ENCODE measurements at regions of chr1 and their contacts with region 1.

Region 1: DNA sequence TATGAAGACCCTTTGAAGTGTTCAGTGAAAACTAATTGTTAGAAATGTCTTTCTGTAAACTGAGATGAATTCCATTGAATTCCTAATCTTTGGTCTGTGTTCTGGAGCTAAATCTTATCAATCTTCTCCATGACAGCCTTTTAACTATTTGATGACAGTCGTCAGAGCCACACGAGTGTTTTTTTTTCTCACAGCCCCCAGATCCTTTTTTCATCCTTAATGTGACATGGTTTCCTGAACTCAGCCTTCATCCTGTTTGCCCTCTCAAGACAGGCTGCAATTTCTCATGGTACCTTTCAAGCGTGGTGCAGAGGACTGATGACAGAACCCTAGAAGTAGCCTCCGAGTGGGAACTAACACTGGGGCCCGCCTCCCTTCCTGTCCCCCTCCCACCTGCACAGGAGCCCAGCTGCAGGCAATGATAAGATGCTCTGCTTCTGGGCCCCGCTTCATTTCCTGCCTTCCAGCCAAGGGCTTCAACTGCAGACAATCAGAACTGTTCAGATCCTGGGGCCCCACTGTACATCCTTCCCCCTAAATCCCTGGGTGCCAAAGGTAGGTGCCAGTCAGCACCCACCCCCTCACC is 114.6 kb upstream of the VAV3 start:
- DNase-seq: peak; percentile 71
- ATAC-seq: peak; percentile 74
- H3K4me3 Mint-ChIP-seq: no peak overlapping the region
- H3K27ac Mint-ChIP-seq: peak overlapping the region; percentile 79
- H3K4me1 Mint-ChIP-seq: peaks cover 71% of the 10 kb centered on the region
- H3K27me3 Mint-ChIP-seq: no peaks in the 10 kb centered on the region

Region 2: GRCh38 chr1:108041360-108042142 is 38.0 kb before region 1 on chr1:
- CTCF ChIA-PET with region 1: interaction called, 3 read pairs
- POLR2A ChIA-PET with region 1: no interaction called
- intact Hi-C with region 1: loop called in 1 of 2 experiments (anchors 5 kb)
- DNase-seq: peak; percentile 22
- ATAC-seq: peak; percentile 85
- H3K4me3 Mint-ChIP-seq: no peak overlapping the region
- H3K27ac Mint-ChIP-seq: peak overlapping the region; percentile 40
- H3K4me1 Mint-ChIP-seq: peaks cover 38% of the 10 kb centered on the region
- H3K27me3 Mint-ChIP-seq: no peaks in the 10 kb centered on the region

Region 3: DNA sequence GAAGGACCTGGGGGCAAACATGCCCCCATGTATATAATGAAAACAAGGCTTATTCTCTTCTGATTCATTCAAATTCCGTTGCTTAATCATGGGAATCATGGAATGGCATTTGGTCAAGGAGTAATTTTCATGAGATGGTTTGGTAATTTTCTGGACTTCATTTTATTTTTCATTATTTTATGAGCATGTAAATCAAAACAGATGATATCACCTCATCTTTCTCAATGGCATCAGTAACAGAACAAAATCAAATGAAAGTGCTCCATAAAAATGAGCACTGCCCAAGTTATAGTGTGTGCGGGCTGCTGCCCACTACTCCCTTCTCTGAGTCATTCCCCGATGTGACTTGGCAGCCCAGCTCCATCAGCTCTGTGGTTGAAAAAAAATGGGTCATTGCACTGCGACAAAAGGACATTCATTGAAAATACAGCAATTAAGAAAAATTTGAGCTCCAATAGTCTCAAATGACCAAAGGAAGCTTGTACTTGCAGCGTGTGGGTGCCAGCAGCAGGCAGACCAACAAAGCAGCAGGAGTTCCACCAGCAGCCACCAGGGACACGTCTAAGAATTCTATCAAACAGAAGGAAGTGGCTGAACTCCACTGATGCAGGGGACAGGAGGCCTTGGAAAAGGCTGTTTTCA is 30.2 kb before region 1 on chr1:
- CTCF ChIA-PET with region 1: interaction called, 7 read pairs
- POLR2A ChIA-PET with region 1: no interaction called
- intact Hi-C with region 1: loop called in 1 of 2 experiments (anchors 2 kb)
- DNase-seq: peak; percentile 51
- ATAC-seq: no peak
- H3K4me3 Mint-ChIP-seq: no peak overlapping the region
- H3K27ac Mint-ChIP-seq: no peak overlapping the region
- H3K4me1 Mint-ChIP-seq: peaks cover 20% of the 10 kb centered on the region
- H3K27me3 Mint-ChIP-seq: no peaks in the 10 kb centered on the region

Region 4: DNA sequence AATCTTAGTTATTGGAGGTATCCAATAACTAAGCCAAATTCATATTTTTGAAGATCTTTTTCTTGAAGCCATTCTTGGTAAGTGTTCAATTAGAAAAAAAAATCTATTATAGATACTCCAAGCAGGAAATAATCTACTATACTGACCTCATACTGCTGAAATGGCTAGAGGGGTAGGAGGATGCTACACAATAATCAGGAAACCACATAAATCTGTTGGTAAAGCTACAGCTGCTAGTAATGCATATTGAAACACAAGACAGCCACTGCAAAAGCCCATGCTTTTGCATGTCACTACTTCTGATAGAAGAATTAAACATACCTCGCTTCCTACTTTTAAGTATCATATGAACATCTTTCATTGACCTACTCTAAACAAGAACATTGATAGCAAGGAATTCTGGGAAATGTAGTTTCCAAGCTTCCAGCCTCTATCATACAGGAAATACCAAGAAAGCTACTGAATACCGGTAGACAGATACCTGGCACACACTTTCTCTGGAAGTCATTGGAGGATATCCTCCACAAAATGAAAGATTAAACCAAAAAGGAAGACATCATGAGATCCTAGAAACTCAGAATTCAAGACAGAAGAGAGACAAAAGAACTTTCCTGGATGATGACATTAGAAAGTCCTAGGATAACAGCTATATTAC is 11.5 kb before region 1 on chr1:
- CTCF ChIA-PET with region 1: no interaction called
- POLR2A ChIA-PET with region 1: no interaction called
- intact Hi-C with region 1: loop called in 1 of 2 experiments (anchors 1 kb)
- DNase-seq: no peak
- ATAC-seq: no peak
- H3K4me3 Mint-ChIP-seq: no peak overlapping the region
- H3K27ac Mint-ChIP-seq: no peak overlapping the region
- H3K4me1 Mint-ChIP-seq: peaks cover 21% of the 10 kb centered on the region
- H3K27me3 Mint-ChIP-seq: no peaks in the 10 kb centered on the region